PC-9 (cell line): ENCODE measurements at regions of chr5 and their contacts with region 1.

Region 1: GRCh38 chr5:29524197-29524596 is 1669.3 kb upstream of the CDH6 start:
- DNase-seq: no peak
- H3K4me3 ChIP-seq: no peak overlapping the region
- H3K27ac ChIP-seq: no peak overlapping the region
- H3K4me1 ChIP-seq: no peaks in the 10 kb centered on the region
- H3K27me3 ChIP-seq: no peaks in the 10 kb centered on the region
- CTCF ChIP-seq: no peak

Region 2: GRCh38 chr5:29543501-29543900 is 19.3 kb after region 1 on chr5:
- CTCF ChIA-PET with region 1: no interaction called
- POLR2A ChIA-PET with region 1: no interaction called
- intact Hi-C with region 1: loop called (anchors 1 kb)
- DNase-seq: no peak
- H3K4me3 ChIP-seq: no peak overlapping the region
- H3K27ac ChIP-seq: no peak overlapping the region
- H3K4me1 ChIP-seq: no peaks in the 10 kb centered on the region
- H3K27me3 ChIP-seq: no peaks in the 10 kb centered on the region
- CTCF ChIP-seq: no peak